ENCODE measurements at regions of chr9 and their contacts with region 1.

Region 1: DNA sequence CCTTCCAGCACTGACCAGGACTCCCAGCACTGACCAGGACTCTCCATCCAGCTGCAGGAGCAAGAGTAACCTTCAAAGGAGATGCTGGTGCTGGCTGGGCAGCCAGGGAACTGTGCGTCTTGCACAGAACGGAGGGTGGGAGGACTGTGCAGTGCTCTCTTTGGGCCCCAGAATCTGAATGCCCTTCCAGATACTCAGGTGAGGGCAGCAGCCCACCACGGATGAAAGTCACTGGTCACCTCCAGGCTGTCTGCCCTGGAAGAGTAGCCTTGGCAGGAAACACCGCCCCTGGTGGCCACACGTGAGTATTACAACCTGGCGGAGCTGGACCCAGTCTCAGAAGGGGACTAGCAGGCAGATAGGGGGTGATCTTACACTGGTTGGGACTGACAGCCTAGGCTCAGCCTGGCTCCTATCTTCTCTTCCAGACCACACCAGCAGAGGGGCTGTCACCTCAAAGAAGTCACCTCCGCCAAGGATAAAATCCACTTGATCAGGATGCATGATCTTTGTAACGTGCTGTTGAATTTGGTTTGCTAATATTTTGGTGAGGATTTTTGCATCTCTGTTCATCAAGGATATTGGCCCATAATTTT is 4.8 kb upstream of the SARDH start:
- DNase-seq: peak; percentile 77
- ATAC-seq: peak; percentile 92
- H3K4me3 ChIP-seq: no peak overlapping the region
- H3K27ac ChIP-seq: no peak overlapping the region
- H3K4me1 ChIP-seq: peaks cover 5 to 8% of the 10 kb centered on the region in 2 experiments; a peak in 3 of 4 replicates
- H3K27me3 ChIP-seq: 0 out of 2 replicates have a peak, but pooled peaks cover 10% of the 10 kb centered on the region
- CTCF ChIP-seq: peak; percentile 99
- POLR2A ChIP-seq: no peak
- RAD21 ChIP-seq: peak; percentile 83

Region 2: DNA sequence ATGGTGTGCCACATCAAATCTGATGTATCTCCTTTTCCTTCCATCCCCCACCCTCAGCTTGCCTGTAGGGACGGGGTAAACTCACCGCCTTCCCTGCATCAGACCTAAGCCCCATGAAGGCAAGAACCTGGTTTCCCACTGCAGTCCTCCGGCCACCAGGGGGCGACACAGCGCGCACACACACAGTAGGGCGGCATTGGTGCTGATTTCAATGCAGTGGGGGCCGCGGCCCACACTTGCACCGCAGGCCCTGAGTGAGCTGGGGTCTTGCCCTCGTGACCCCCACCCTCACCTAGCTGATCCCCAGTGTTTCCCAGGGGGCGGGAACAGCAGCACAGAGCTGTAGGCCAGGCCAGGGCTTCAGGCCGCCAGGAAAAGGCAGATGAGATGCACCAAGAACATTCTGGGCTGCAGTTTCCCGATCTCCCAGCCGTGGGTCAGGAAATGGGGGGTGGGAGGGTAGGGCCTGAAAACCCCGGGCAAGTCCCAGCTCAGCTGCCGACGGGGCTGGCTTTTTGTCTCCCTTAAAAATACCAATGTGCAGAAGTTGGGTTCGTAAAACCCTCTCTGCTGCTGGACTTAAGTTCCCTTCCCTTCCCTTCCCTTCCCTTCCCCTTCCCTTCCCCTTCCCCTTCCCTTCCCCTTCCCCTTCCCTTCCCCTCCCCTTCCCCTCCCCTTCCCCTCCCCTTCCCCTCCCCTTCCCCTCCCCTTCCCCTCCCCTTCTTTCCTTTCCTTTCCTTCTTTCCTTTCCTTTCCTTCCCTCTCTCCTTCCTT is 153.3 kb before region 1 on chr9:
- CTCF ChIA-PET with region 1: no interaction called
- POLR2A ChIA-PET with region 1: no interaction called
- RAD21 ChIA-PET with region 1: no interaction called
- intact Hi-C with region 1: no loop called
- DNase-seq: peak; percentile 40
- ATAC-seq: peak; percentile 88
- H3K4me3 ChIP-seq: no peak overlapping the region
- H3K27ac ChIP-seq: no peak overlapping the region
- H3K4me1 ChIP-seq: peaks cover 3 to 18% of the 10 kb centered on the region in 2 experiments
- H3K27me3 ChIP-seq: no peaks in the 10 kb centered on the region
- CTCF ChIP-seq: peak; percentile 22 to 99 (median 97); a peak in 5 of 6 replicates
- POLR2A ChIP-seq: no peak
- RAD21 ChIP-seq: no peak; the same call in 1 of the 2 replicates

Region 3: DNA sequence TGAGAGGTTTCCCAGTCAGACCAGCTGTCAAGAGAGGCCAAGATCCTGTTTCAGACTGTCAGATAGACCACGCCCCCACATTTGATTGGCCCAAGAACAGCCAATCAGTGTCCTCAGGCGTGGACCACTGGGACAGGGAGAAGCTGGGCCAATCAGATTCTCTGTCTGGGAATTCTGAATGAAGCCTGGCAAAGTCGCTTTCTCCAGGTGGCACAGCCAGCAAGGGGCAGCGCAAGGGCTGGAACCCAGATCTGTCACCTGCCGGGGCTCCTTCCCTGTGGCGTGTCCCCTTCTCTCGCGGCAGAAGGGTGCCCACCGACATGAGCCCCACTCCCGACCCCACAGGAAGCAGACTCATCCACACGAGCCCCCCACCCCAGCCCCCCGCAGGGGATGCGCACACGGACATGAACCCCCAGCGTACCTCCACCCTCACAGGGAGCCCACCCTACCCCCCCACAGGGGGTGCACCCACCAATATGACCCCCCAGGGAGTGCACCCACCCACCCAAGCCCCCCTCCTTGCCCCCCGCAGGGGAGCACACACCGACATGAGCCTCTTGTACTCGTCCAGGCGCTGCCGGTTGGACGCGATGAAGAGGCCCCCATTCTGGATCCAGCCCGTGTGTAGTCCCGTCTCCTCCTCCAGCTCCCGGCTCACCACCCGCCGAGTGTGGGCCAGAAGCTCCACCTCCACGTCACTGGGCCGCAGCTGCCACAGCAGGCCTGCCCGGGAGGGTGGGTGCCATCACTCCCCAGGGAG is 10.9 kb before region 1 on chr9:
- CTCF ChIA-PET with region 1: interaction called, 11 read pairs
- POLR2A ChIA-PET with region 1: no interaction called
- RAD21 ChIA-PET with region 1: interaction called in 1 of 2 experiments, 3 read pairs
- intact Hi-C with region 1: no loop called
- DNase-seq: peak; percentile 49
- ATAC-seq: peak; percentile 86
- H3K4me3 ChIP-seq: no peak overlapping the region
- H3K27ac ChIP-seq: no peak overlapping the region
- H3K4me1 ChIP-seq: peaks cover 0 to 3% of the 10 kb centered on the region in 2 experiments; a peak in 2 of 4 replicates
- H3K27me3 ChIP-seq: no peaks in the 10 kb centered on the region
- CTCF ChIP-seq: no peak
- POLR2A ChIP-seq: no peak
- RAD21 ChIP-seq: no peak

Region 4: GRCh38 chr9:133782157-133783130 is 39.5 kb after region 1 on chr9:
- CTCF ChIA-PET with region 1: interaction called, 11 read pairs
- POLR2A ChIA-PET with region 1: no interaction called
- RAD21 ChIA-PET with region 1: interaction called in 1 of 2 experiments, 3 read pairs
- intact Hi-C with region 1: no loop called
- DNase-seq: peak; percentile 26
- ATAC-seq: peak; percentile 81
- H3K4me3 ChIP-seq: no peak overlapping the region
- H3K27ac ChIP-seq: no peak overlapping the region
- H3K4me1 ChIP-seq: no peaks in the 10 kb centered on the region
- H3K27me3 ChIP-seq: no peaks in the 10 kb centered on the region
- CTCF ChIP-seq: peak; percentile 75 to 88 (median 87); a peak in 5 of 6 replicates
- POLR2A ChIP-seq: no peak
- RAD21 ChIP-seq: peak; percentile 70